ENCODE measurements at regions of chr6 and their contacts with region 1.

Region 1: DNA sequence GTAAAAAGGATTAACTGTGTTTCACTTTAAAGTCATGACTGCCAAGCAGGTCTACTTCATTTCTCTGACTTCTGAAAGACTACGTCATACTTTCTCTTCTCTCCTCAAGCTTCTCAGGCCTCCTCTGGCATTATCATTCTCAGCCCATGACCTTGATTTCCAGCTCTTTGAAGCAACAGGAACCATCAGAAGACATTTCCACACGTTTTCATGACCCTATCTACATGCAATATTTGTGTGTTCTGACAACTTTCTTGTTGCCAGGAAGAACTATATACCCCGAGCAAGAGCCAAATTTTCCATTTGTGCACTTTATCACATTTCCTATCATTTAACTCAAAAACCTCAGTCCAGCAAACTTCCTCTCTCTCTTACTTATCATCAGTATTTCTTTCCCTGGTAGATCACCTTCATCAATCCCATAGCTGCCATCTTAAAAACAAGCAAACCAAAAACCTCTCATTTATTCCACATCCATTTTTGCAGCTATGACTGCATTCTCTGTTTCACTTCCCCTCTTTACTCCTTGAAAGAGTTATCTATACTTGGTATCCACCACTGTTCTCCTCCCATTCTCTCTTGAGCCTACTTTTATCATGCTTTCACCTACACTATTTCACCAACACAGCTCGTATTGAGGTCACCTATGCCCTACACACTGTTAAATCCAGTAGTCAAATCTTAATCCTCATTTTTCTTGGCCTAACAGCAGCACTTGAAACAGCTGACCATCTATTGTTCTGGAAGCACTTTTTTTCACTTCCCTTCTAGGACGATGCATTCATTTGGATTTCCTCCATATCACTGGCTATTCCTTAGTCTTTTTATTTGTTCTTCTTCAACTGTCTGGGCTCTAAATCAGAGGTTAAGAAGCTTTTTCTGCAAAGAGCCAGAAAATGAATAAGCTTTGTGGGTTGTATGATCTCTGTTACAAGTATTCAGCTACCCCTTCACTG is 47.1 kb downstream of the STX7 start:
- DNase-seq: no peak
- H3K4me3 ChIP-seq: no peak overlapping the region
- H3K27ac ChIP-seq: no peak overlapping the region
- H3K27me3 ChIP-seq: no peaks in the 10 kb centered on the region
- CTCF ChIP-seq: no peak

Region 2: DNA sequence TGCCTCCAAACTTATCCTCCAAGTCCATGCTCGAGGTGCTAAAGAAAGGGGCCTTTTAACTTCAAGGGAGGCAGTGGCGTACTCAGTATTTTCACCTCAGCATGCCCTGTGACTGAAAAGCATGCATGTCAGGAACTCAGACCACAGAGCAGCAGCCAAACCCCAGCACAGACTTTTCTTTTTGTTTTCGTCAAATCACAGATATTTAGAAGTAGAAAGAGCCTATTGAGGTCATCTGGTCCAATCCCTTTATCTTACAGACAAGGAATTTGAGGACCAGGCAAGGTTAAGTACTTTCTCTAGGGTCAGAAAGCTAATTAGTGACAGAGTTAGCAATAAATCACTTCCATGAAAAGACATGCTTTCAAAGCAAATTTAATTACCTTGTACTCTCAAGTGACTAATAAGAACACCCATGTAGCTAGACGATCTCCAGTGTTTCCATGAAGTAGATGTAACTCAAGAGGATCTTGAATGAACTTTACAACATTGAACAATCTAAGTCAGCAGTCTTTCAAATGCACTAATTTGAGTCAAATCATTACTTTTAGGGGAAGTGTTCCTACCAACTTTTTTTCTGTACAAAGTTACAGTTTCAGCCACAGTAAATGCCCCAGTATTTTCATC is 100.4 kb before region 1 on chr6:
- intact Hi-C with region 1: loop called in 1 of 2 experiments (anchors 10 kb)
- DNase-seq: no peak
- H3K4me3 ChIP-seq: no peak overlapping the region
- H3K27ac ChIP-seq: no peak overlapping the region
- H3K27me3 ChIP-seq: no peaks in the 10 kb centered on the region
- CTCF ChIP-seq: no peak

Region 3: DNA sequence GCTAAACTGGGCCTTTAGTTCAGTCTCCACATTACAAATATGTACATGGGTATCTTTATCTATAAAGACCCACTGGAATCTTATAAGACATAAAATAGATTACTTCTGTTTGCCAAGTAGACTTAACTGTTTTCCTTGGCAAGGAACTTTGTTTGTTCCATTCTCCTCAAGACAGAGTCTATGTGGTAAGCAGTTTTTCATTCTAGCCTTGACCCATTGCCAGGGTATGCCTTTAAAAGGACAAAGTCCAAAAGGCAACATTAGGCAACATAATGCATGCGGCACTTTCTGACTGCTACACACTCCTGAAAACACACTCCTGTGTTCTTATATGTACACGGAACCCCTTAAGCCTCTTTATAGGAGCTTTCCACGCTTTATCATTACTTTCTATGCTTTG is 227.7 kb after region 1 on chr6:
- intact Hi-C with region 1: no loop called
- DNase-seq: no peak
- H3K4me3 ChIP-seq: no peak overlapping the region
- H3K27ac ChIP-seq: no peak overlapping the region
- H3K27me3 ChIP-seq: peaks cover 0 to 5% (median 0%) of the 10 kb centered on the region in 45 donors
- CTCF ChIP-seq: no peak

Region 4: DNA sequence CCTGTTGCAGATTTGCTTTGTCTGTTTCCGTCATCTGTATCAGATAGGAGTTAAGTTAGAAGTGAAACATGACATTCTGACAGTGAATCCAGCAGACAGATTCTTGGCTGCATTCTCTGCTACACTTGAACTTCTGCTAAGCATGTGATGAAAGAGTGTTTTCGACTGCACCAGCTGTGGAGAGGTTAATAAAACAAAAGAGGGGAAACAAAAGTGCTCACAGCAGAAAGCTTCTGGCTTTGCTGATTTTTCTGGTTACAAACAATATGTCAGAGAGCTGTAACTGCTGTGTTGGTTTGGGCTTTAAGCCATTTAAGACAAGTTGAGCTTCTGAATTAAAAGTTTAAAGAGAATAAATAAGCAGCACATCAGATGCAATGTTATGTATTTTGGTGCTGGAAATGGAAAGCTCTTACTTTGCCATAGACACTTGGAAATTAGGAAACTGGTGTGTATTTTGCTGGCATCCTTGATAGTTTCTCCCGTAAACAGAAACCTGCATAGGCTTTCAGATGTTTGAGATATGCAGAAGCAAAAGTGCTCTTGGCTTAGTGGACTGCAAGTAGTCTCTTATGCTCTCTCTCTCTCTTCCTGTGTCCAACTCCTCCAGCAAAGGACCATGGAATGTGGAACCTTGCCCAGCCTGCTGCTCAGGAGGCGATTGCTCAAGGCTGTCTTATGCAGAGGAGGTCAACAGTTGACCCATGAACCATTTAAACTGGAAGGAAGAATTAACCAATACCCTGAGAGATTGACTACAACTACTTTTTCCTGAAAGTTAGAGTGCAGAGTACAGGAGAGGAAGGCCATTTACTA is 453.4 kb after region 1 on chr6:
- intact Hi-C with region 1: no loop called
- DNase-seq: peak in 1 of 10 donors; percentile 35
- H3K4me3 ChIP-seq: peak overlapping the region in 3 of 59 donors; percentile 8 to 22 (median 9)
- H3K27ac ChIP-seq: no peak overlapping the region
- H3K27me3 ChIP-seq: no peaks in the 10 kb centered on the region
- CTCF ChIP-seq: no peak

Region 5: GRCh38 chr6:133017581-133017980 is 551.8 kb after region 1 on chr6:
- intact Hi-C with region 1: no loop called
- DNase-seq: no peak
- H3K4me3 ChIP-seq: no peak overlapping the region
- H3K27ac ChIP-seq: no peak overlapping the region
- H3K27me3 ChIP-seq: peaks cover 0 to 2% (median 0%) of the 10 kb centered on the region in 45 donors
- CTCF ChIP-seq: no peak